ENCODE measurements at regions of chr16 and their contacts with region 1.

Region 1: GRCh38 chr16:68328151-68328859 is 17.5 kb downstream of the PRMT7 start:
- DNase-seq: peak; percentile 86
- H3K4me3 ChIP-seq: no peak overlapping the region; a peak in 1 of 4 replicates
- H3K27ac ChIP-seq: no peak overlapping the region
- H3K4me1 ChIP-seq: peaks cover 0 to 17% of the 10 kb centered on the region in 2 experiments; a peak in 1 of 4 replicates
- H3K27me3 ChIP-seq: no peaks in the 10 kb centered on the region
- CTCF ChIP-seq: peak; percentile 85
- EP300 ChIP-seq: no peak
- RAD21 ChIP-seq: peak; percentile 91

Region 2: DNA sequence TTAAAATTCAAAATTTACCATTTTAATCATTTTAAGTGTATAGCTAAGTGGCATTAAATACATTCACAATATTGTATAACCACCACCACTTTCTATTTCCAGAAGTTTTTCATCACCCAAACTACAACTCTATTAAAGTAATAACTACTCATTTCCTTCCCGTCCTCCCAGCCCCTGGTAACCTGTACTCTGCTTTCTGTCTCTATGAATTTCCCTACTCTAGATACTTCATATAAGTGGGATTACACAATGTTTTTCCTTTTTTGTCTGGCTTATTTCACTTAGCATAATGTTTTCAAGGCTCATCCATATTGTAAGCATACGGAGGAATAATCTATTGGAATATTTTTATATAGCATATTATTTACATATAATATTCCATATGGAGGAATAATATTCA is 122.1 kb before region 1 on chr16:
- CTCF ChIA-PET with region 1: no interaction called
- POLR2A ChIA-PET with region 1: no interaction called
- DNase-seq: no peak
- H3K4me3 ChIP-seq: no peak overlapping the region
- H3K27ac ChIP-seq: no peak overlapping the region
- H3K4me1 ChIP-seq: no peaks in the 10 kb centered on the region; a peak in 1 of 4 replicates
- H3K27me3 ChIP-seq: no peaks in the 10 kb centered on the region
- CTCF ChIP-seq: no peak
- EP300 ChIP-seq: no peak
- RAD21 ChIP-seq: no peak

Region 3: DNA sequence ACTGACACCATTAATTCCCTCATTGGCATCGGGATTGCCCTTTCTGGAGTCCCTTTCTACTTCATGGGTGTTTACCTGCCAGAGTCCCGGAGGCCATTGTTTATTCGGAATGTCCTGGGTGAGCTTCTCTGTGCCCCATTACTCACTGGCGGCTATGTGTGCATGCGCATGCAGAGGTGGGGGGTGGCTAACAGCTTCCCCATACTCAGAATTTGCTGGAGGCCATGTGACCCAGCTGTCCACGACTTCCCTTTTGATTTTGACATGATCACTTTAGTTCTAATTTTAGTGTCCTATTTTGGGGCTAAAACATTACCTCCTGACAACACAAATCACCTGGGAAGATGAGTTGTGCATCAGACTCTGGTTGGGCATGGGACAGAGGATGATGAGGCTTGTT is 31.6 kb before region 1 on chr16:
- CTCF ChIA-PET with region 1: interaction called, 12 read pairs
- POLR2A ChIA-PET with region 1: no interaction called
- DNase-seq: no peak
- H3K4me3 ChIP-seq: no peak overlapping the region
- H3K27ac ChIP-seq: no peak overlapping the region
- H3K4me1 ChIP-seq: peaks cover 3 to 15% of the 10 kb centered on the region in 2 experiments; a peak in 3 of 4 replicates
- H3K27me3 ChIP-seq: no peaks in the 10 kb centered on the region
- CTCF ChIP-seq: no peak
- EP300 ChIP-seq: no peak
- RAD21 ChIP-seq: no peak

Region 4: GRCh38 chr16:68338326-68339119 is 10.2 kb after region 1 on chr16:
- CTCF ChIA-PET with region 1: interaction called, 15 read pairs
- POLR2A ChIA-PET with region 1: no interaction called
- DNase-seq: no peak
- H3K4me3 ChIP-seq: no peak overlapping the region
- H3K27ac ChIP-seq: no peak overlapping the region
- H3K4me1 ChIP-seq: no peaks in the 10 kb centered on the region
- H3K27me3 ChIP-seq: no peaks in the 10 kb centered on the region
- CTCF ChIP-seq: no peak
- EP300 ChIP-seq: no peak
- RAD21 ChIP-seq: no peak

Region 5: GRCh38 chr16:68356249-68356918 is 28.1 kb after region 1 on chr16:
- CTCF ChIA-PET with region 1: interaction called, 11 read pairs
- POLR2A ChIA-PET with region 1: no interaction called
- DNase-seq: peak; percentile 25
- H3K4me3 ChIP-seq: no peak overlapping the region
- H3K27ac ChIP-seq: no peak overlapping the region
- H3K4me1 ChIP-seq: peaks cover 0 to 4% of the 10 kb centered on the region in 2 experiments; a peak in 1 of 4 replicates
- H3K27me3 ChIP-seq: no peaks in the 10 kb centered on the region
- CTCF ChIP-seq: no peak
- EP300 ChIP-seq: no peak
- RAD21 ChIP-seq: no peak

Region 6: GRCh38 chr16:68460067-68460466 is 131.8 kb after region 1 on chr16:
- CTCF ChIA-PET with region 1: no interaction called
- POLR2A ChIA-PET with region 1: no interaction called
- DNase-seq: no peak
- H3K4me3 ChIP-seq: no peak overlapping the region
- H3K27ac ChIP-seq: no peak overlapping the region
- H3K4me1 ChIP-seq: no peaks in the 10 kb centered on the region; a peak in 1 of 4 replicates
- H3K27me3 ChIP-seq: no peaks in the 10 kb centered on the region
- CTCF ChIP-seq: no peak
- EP300 ChIP-seq: no peak
- RAD21 ChIP-seq: no peak

Measured in SK-N-SH (cell line).